ENCODE measurements at regions of chr4 and their contacts with region 1.

Region 1: GRCh38 chr4:48269861-48270522 is 354 bp upstream of the TEC start:
- DNase-seq: peak; percentile 90
- ATAC-seq: peak; percentile 91 to 92
- H3K4me3 ChIP-seq: peak overlapping the region; percentile 92 to 100 (median 94)
- H3K27ac ChIP-seq: peak overlapping the region; percentile 88 to 94 (median 92)
- H3K4me1 ChIP-seq: peaks cover 5% of the 10 kb centered on the region in 2 donors
- H3K27me3 ChIP-seq: no peaks in the 10 kb centered on the region
- CTCF ChIP-seq: peak in 3 of 5 experiments; percentile 15 to 25 (median 19)
- POLR2A ChIP-seq: peak; percentile 38 to 52

Region 2: GRCh38 chr4:48093949-48094550 is 175.9 kb before region 1 on chr4:
- in situ Hi-C with region 1: no loop called
- intact Hi-C with region 1: no loop called
- DNase-seq: no peak
- ATAC-seq: no peak
- H3K4me3 ChIP-seq: no peak overlapping the region
- H3K27ac ChIP-seq: no peak overlapping the region
- H3K4me1 ChIP-seq: no peaks in the 10 kb centered on the region
- H3K27me3 ChIP-seq: no peaks in the 10 kb centered on the region
- CTCF ChIP-seq: no peak
- POLR2A ChIP-seq: no peak

Region 3: GRCh38 chr4:48227659-48228058 is 42.3 kb before region 1 on chr4:
- in situ Hi-C with region 1: no loop called
- intact Hi-C with region 1: no loop called
- DNase-seq: no peak
- ATAC-seq: no peak
- H3K4me3 ChIP-seq: no peak overlapping the region
- H3K27ac ChIP-seq: no peak overlapping the region
- H3K4me1 ChIP-seq: no peaks in the 10 kb centered on the region
- H3K27me3 ChIP-seq: no peaks in the 10 kb centered on the region
- CTCF ChIP-seq: no peak
- POLR2A ChIP-seq: no peak

Region 4: DNA sequence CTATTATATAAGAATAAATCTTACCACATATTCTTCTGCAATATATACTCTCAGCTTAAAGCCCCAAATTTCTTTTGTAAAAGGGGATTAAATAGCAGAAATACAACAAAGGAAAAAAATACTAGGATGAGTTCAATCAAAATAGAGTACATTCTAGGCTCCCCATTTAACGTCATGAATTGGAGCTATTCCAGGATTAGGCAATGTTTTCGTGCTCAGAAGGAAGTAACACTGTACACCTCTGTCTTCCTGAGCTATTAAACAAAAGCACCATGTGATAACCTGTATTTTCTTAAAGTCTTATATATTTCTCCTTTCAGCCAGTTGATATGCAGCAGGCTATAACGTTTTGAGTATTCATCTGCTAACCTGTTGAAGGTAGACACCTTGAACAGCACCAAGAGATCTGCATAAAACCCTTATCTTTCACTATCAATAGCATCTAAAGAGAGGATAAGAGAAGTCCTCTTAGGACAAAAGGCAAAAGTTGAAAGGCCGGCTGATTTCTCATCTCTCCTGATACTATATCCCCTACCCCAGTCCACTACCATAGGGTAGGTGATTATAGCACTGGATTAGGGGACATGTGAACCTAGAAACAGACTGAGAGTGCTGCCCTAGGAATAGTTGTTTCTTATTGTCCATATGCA is 31.9 kb before region 1 on chr4:
- in situ Hi-C with region 1: no loop called
- intact Hi-C with region 1: no loop called
- DNase-seq: no peak
- ATAC-seq: peak in 1 of 2 donors; percentile 36
- H3K4me3 ChIP-seq: no peak overlapping the region
- H3K27ac ChIP-seq: no peak overlapping the region
- H3K4me1 ChIP-seq: no peaks in the 10 kb centered on the region
- H3K27me3 ChIP-seq: no peaks in the 10 kb centered on the region
- CTCF ChIP-seq: no peak
- POLR2A ChIP-seq: no peak

Region 5: DNA sequence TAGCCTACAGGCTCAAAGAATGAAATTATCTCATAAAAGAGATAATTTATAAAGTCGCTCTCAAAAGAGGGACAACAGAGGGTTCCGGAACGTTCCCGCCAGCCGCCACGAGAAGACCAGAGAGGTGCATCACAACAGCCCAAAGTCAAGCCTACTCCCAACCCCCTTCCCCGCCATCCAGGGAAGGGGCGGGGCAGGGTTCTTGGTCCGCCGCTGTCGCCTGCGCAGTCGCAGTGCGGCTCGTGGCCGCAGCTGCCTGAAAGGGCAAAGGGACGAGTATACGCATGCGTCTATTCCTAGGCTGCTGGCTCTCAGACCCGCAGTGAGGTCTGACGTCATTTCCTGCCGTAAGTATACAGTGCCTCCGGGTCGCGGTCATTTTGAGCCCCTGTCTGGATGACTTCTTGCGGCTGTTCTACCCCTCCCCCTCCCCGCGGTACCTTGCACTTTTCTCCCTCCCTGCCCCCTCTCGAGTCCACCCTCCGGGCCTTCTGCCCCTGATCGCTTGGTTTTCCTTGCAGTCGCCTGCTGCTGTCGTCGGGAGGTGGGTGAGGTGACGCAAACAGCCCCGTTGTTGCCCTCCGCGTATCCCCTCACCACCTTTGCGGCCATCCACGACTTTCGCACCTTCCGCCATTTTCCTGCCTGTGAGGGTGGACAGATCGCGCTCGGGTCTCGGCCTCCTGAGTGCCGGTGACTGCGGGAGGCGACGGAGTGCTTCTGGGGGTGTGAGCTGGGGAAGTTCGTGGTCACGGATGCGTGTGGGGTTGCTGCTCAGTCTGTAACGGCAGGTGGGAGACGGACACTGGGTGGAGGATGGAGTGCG is 560.9 kb after region 1 on chr4 and contains the start of gene OCIAD1:
- in situ Hi-C with region 1: no loop called
- intact Hi-C with region 1: loop called (anchors 10 kb)
- DNase-seq: peak; percentile 99
- ATAC-seq: peak; percentile 100
- H3K4me3 ChIP-seq: peak within 1 kb of the TSS; percentile 80 to 100 (median 92)
- H3K27ac ChIP-seq: peak within 1 kb of the TSS; percentile 95 to 96 (median 96)
- H3K4me1 ChIP-seq: peaks cover 17 to 22% of the 10 kb centered on the region in 2 donors
- H3K27me3 ChIP-seq: no peaks in the 10 kb centered on the region
- CTCF ChIP-seq: peak in 1 of 5 experiments; percentile 7
- POLR2A ChIP-seq: peak; percentile 38 to 47
- total RNA-seq, gene OCIAD1: 84.4 to 157 (median 126) TPM